ENCODE measurements at regions of chr10 and their contacts with region 1.

Region 1: GRCh38 chr10:98467506-98468346 is 21.0 kb upstream of the HPS1 start:
- DNase-seq: peak; percentile 69 to 77 (median 76)
- ATAC-seq: peak; percentile 98 to 99 (median 98)
- H3K4me3 ChIP-seq: peak overlapping the region; percentile 49 to 58 (median 51)
- H3K27ac ChIP-seq: no peak overlapping the region
- H3K4me1 ChIP-seq: no peaks in the 10 kb centered on the region
- H3K27me3 ChIP-seq: no peaks in the 10 kb centered on the region
- CTCF ChIP-seq: peak; percentile 81 to 87 (median 81)
- POLR2A ChIP-seq: no peak

Region 2: GRCh38 chr10:99172130-99172738 is 704.5 kb after region 1 on chr10:
- intact Hi-C with region 1: loop called in 1 of 2 experiments (anchors 10 kb)
- DNase-seq: peak in 1 of 3 donors; percentile 48
- ATAC-seq: peak; percentile 66 to 73 (median 71)
- H3K4me3 ChIP-seq: no peak overlapping the region
- H3K27ac ChIP-seq: no peak overlapping the region
- H3K4me1 ChIP-seq: no peaks in the 10 kb centered on the region
- H3K27me3 ChIP-seq: no peaks in the 10 kb centered on the region
- CTCF ChIP-seq: peak; percentile 49 to 75 (median 62)
- POLR2A ChIP-seq: no peak